ENCODE measurements at regions of chr9 and their contacts with region 1.

Region 1: GRCh38 chr9:90665072-90665471 is 22.4 kb upstream of the DIRAS2 start:
- DNase-seq: no peak
- H3K4me3 ChIP-seq: no peak overlapping the region
- H3K27ac ChIP-seq: no peak overlapping the region
- H3K4me1 ChIP-seq: no peaks in the 10 kb centered on the region
- H3K27me3 ChIP-seq: no peaks in the 10 kb centered on the region
- CTCF ChIP-seq: no peak

Region 2: GRCh38 chr9:90735952-90736351 is 70.9 kb after region 1 on chr9:
- intact Hi-C with region 1: loop called (anchors 10 kb)
- DNase-seq: no peak
- H3K4me3 ChIP-seq: no peak overlapping the region
- H3K27ac ChIP-seq: no peak overlapping the region
- H3K4me1 ChIP-seq: no peaks in the 10 kb centered on the region
- H3K27me3 ChIP-seq: no peaks in the 10 kb centered on the region
- CTCF ChIP-seq: no peak